ENCODE measurements at regions of chr14 and their contacts with region 1.

Region 1: DNA sequence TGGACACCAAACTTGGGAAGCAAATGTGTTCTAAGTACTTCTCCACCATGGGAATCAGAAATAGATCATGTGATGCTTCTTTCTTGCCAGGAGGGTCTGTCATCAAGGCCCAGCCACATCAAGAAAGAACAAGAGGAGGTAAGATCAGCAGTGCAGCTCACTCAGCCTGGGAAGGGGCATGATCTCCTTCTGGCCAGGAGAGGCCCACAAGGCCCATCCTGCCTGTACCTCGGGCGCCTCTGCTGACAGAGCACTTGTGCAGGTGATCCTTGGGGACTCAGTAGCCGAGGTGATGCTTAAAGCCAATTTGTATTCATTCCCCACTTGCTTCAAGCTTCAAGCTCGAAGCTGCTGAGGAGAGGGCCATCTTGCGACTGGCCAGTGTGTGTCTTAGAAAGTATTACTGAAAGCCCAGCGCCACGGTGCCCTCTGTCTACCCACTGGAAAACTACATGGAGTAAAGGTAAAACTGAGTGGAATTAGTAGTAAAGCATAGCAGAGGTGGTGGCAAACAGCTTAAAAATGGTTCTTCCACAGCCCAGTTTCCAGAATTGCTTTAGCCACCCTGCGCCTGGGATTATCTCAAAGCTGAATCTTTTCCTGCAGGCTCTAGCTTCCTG is 26.2 kb downstream of the RTRAF start:
- DNase-seq: peak in 2 of 5 donors; percentile 30 to 51
- ATAC-seq: peak; percentile 20 to 52 (median 40)
- H3K4me3 ChIP-seq: no peak overlapping the region
- H3K27ac ChIP-seq: peak overlapping the region; percentile 43 to 86 (median 76)
- H3K4me1 ChIP-seq: peaks cover 22 to 98% (median 76%) of the 10 kb centered on the region in 12 donors
- H3K27me3 ChIP-seq: no peaks in the 10 kb centered on the region
- CTCF ChIP-seq: peak; percentile 25 to 64 (median 49)
- POLR2A ChIP-seq: no peak

Region 2: DNA sequence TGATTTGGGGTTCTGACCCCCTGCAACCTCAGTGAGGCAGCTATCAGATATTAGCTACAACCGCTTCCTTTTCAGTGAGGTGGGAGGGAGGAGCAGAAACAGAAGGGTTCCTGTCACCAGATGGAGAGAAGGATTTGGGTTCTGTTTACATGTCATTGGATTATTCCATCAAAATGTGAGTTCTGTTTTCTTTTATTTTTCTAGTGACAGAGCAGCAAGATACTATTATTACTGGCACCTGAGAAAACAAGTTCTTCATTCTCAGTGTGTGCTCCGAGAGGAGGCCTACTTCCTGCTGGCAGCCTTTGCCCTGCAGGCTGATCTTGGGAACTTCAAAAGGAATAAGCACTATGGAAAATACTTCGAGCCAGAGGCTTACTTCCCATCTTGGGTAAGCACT is 311.0 kb before region 1 on chr14:
- intact Hi-C with region 1: no loop called
- DNase-seq: no peak
- ATAC-seq: no peak
- H3K4me3 ChIP-seq: no peak overlapping the region
- H3K27ac ChIP-seq: no peak overlapping the region
- H3K4me1 ChIP-seq: peaks cover 0 to 5% (median 0%) of the 10 kb centered on the region in 12 donors
- H3K27me3 ChIP-seq: no peaks in the 10 kb centered on the region
- CTCF ChIP-seq: no peak
- POLR2A ChIP-seq: no peak

Region 3: DNA sequence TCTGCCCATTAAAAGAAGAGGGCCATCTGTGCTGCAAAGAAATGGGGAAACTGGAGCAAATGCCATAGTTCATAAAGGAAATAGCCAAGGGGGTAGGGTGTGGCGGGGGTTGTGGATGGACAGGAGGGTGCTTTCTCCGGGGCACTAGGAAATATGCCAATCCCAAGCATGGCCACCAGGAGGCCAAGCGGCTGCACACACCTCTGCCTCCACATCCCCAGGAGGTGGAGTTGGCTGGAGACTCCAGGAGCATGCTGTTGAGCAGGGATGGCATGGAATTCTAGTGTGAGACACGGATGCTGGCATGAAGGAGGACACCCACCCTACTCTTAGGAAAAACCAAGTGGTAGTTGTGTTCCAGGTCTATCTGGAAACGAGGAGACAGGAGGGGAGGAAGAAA is 28.2 kb after region 1 on chr14:
- intact Hi-C with region 1: loop called in 1 of 10 experiments (anchors 5 kb)
- DNase-seq: peak in 2 of 5 donors; percentile 40 to 49
- ATAC-seq: peak in 3 of 4 donors; percentile 43 to 48 (median 44)
- H3K4me3 ChIP-seq: no peak overlapping the region
- H3K27ac ChIP-seq: peak overlapping the region in 4 of 12 donors; percentile 3 to 32 (median 16)
- H3K4me1 ChIP-seq: peaks cover 3 to 63% (median 55%) of the 10 kb centered on the region in 12 donors
- H3K27me3 ChIP-seq: no peaks in the 10 kb centered on the region
- CTCF ChIP-seq: peak; percentile 41 to 69 (median 52)
- POLR2A ChIP-seq: no peak

Region 4: GRCh38 chr14:52060080-52060479 is 44.6 kb after region 1 on chr14:
- intact Hi-C with region 1: loop called in 8 of 10 experiments (anchors 5 kb)
- DNase-seq: no peak
- ATAC-seq: no peak
- H3K4me3 ChIP-seq: no peak overlapping the region
- H3K27ac ChIP-seq: peak overlapping the region in 11 of 12 donors; percentile 8 to 81 (median 68)
- H3K4me1 ChIP-seq: peaks cover 0 to 78% (median 59%) of the 10 kb centered on the region in 12 donors
- H3K27me3 ChIP-seq: no peaks in the 10 kb centered on the region
- CTCF ChIP-seq: peak in 1 of 12 donors; percentile 13
- POLR2A ChIP-seq: no peak

Region 5: GRCh38 chr14:52080817-52081755 is 65.6 kb after region 1 on chr14:
- intact Hi-C with region 1: no loop called
- DNase-seq: no peak
- ATAC-seq: peak in 3 of 4 donors; percentile 55 to 68 (median 67)
- H3K4me3 ChIP-seq: no peak overlapping the region
- H3K27ac ChIP-seq: peak overlapping the region in 4 of 12 donors; percentile 12 to 35 (median 17)
- H3K4me1 ChIP-seq: peaks cover 0 to 38% (median 20%) of the 10 kb centered on the region in 12 donors
- H3K27me3 ChIP-seq: no peaks in the 10 kb centered on the region
- CTCF ChIP-seq: no peak
- POLR2A ChIP-seq: no peak